GM10248 (cell line): ENCODE measurements at regions of chr1 and their contacts with region 1.

Region 1: DNA sequence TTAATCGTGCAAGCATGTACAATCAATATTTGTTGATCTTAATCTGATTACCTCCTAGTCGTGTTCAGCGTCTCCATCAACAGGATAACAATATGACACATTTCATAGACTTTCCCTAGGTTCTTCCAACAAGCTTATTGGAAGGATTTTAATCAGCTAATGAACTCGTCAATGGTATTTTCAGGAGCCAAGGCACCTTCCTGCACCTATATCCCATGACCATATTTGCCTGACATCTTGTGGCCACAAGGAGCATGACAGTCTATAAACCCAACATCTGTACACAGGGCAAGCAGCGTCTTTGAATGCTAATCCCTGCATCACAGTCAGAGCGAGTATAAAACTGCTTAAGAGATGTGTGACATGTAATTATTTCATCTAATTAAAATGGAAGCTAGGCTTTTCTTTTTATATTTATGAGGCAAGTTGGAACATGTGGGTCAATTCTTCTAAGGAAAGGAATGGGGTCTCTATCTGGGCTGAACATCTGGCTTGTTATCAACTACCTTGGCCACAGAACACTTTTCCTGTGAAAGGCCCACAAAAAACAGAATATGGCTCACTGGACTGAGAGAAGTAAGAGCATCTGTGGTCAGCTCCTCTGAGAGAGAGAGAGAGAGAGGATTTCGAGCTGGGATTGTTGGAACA is 388.8 kb downstream of the NTNG1 start:
- DNase-seq: peak; percentile 70
- CTCF ChIP-seq: peak; percentile 85

Region 2: GRCh38 chr1:107430540-107431228 is 98.9 kb before region 1 on chr1:
- CTCF ChIA-PET with region 1: interaction called, 46 read pairs
- POLR2A ChIA-PET with region 1: no interaction called
- DNase-seq: peak; percentile 25
- CTCF ChIP-seq: peak; percentile 52

Region 3: GRCh38 chr1:107515702-107516101 is 13.9 kb before region 1 on chr1:
- CTCF ChIA-PET with region 1: interaction called, 63 read pairs
- POLR2A ChIA-PET with region 1: no interaction called
- DNase-seq: no peak
- CTCF ChIP-seq: no peak

Region 4: GRCh38 chr1:107547363-107548155 is 17.9 kb after region 1 on chr1:
- CTCF ChIA-PET with region 1: interaction called, 16 read pairs
- POLR2A ChIA-PET with region 1: no interaction called
- DNase-seq: no peak
- CTCF ChIP-seq: no peak

Region 5: DNA sequence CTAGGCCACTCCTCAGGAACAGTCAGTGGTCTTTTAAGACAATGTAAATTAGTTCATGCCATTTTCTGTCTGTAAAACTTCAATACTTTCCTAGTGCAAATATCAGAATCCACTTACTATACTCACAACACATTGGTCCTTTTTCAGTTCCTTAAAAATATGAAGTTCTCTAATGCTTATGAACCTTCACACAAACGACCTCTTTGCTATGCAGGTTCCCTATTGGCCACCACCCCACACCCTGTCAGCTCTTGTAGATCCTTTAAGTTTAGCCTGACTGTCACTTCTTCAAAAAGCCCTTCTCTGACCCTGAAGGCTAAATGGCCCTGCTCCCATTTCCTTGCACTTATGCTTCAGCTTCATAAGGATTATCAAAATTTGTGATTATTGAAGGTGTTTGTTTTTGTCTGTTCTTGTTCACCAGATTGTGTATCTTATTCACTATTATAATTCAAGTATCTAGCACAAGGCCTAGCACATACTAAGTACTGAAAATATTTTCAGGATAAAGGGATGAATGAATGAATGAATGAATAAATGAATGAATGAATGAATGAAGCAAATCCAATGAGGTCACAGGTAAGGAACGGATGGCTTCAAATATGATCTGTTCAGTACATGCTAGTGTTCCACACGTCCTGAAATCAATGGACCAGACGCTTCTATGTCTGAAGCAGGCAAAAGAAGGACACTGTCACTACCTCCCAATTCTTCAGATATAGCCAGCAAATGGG is 61.4 kb after region 1 on chr1:
- CTCF ChIA-PET with region 1: no interaction called
- POLR2A ChIA-PET with region 1: no interaction called
- DNase-seq: no peak
- CTCF ChIP-seq: no peak